ENCODE measurements at regions of chr15 and their contacts with region 1.

Region 1: GRCh38 chr15:52179278-52180195 is 11.7 kb downstream of the GNB5 start:
- DNase-seq: peak; percentile 57
- ATAC-seq: peak; percentile 85
- H3K4me3 ChIP-seq: peak overlapping the region; percentile 66 to 80 (median 76)
- H3K27ac ChIP-seq: no peak overlapping the region
- H3K4me1 ChIP-seq: peaks cover 54% of the 10 kb centered on the region
- H3K27me3 ChIP-seq: 0 out of 5 replicates have a peak, but pooled peaks cover 0 to 4% of the 10 kb centered on the region in 2 experiments
- CTCF ChIP-seq: no peak
- EP300 ChIP-seq: no peak
- POLR2A ChIP-seq: peak; percentile 38 to 65; a peak in 3 of 4 replicates
- RAD21 ChIP-seq: no peak

Region 2: DNA sequence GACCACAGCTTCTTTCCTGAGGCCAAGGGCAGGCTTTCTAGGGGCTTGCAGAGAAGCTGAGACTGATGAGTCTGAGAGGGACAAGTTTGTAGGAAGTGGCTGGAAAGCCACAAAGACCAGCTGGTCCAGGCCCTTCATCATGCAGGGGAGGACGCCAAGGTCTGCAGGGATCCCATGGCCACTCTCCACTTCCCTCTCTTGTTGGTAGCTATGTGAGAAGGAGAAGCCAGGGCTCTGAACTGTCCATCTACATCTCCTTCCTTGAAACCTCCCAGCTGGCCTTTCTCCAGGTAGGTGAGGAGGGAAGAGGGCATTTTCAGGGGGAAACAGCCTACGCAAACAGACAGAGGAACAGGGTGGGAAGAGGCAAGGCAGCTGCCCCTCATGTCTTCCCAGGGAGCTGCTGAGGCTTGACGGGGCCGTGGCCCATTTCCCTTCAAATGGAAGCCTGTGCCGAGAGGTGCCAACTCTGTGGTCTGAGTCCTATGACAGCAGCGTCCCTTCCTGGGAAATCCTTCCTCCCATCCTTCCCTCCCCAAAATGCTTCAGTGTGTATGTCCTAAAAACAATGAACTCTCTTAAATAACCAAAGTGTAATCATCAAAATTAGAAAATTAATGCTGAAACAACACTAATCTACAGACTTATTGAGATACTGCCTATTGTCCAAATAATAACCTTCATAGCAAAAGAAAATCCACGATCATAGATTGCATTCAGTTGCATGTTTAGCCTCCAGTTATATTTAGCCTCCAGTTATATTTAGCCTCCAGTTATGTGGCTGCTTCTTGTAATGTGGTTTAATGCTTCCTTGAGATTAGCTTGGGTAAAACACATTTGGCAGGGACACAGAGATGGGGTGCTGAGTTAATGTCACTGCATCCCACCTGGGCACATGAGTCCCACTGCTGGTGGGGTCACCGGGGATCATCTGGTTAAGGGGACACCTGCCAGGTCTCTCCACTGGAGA is 24.4 kb before region 1 on chr15:
- CTCF ChIA-PET with region 1: no interaction called
- POLR2A ChIA-PET with region 1: interaction called, 10 read pairs
- in situ Hi-C with region 1: no loop called
- intact Hi-C with region 1: no loop called
- DNase-seq: no peak
- ATAC-seq: no peak
- H3K4me3 ChIP-seq: no peak overlapping the region
- H3K27ac ChIP-seq: no peak overlapping the region
- H3K4me1 ChIP-seq: peaks cover 21% of the 10 kb centered on the region
- H3K27me3 ChIP-seq: no peaks in the 10 kb centered on the region
- CTCF ChIP-seq: no peak
- EP300 ChIP-seq: no peak
- POLR2A ChIP-seq: no peak
- RAD21 ChIP-seq: no peak

Region 3: DNA sequence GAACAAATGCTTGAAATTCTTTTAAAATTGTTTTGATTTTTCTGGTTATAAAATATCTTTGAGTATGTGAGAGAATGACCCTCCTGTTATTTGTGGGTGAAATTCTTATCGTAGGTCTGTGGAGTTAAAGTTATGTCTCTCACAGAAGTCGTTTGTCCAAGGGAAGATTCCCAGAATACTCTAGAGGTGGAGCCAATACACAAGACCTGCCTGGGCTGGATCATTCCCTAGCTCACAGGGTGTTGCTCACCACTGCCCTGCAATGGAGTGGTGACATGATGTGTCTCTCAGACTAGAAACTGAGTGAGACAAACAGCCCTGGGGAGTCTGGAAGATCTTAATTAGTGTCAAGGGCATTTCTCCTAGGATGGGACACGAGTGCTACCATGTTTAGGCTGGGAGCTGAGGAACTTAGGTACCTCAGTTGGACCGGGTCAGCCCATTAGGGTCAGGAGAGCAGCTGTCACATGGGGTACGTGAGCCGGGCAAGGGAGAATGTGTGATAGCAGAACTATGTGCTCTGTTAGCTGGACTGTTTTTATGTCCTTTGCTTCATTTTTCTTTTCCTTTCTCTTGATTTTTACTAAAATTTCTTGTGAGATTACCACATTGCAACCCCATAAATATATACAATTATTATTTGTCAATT is 169.6 kb after region 1 on chr15:
- CTCF ChIA-PET with region 1: no interaction called
- POLR2A ChIA-PET with region 1: no interaction called
- in situ Hi-C with region 1: no loop called
- intact Hi-C with region 1: no loop called
- DNase-seq: no peak
- ATAC-seq: no peak
- H3K4me3 ChIP-seq: no peak overlapping the region
- H3K27ac ChIP-seq: no peak overlapping the region
- H3K4me1 ChIP-seq: no peaks in the 10 kb centered on the region
- H3K27me3 ChIP-seq: no peaks in the 10 kb centered on the region
- CTCF ChIP-seq: no peak
- EP300 ChIP-seq: no peak
- POLR2A ChIP-seq: no peak
- RAD21 ChIP-seq: no peak

Region 4: DNA sequence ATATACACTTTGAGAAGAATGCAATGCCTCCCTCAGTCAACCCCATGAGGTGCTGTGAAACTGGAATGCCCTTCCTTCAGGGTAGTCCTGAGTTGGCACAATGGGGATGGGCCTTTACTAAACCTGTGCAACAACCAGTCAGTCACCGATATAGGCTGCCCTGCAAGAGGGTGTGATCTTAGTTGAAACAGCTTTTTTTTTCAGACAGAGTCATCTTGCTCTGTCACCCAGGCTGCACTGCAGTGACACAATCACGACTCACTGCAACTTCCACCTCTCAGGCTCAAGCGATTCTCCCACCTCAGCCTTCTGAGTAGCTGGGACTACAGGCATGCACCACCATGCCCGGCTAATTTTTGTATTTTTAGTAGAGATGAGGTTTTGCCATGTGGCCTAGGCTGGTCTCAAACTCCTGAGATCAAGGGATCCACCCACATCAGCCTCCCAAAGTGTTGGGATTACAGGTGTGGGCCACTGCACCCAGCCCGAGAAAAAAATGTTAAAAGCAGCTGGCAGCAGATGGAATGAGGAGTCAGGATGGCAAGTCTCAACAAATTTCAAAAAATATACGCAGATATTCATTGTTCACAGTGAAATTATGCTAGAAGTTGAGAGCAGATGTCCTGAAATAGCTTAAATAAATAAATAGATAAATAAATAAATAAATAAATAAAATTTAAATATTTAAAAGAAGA is 317.4 kb after region 1 on chr15:
- CTCF ChIA-PET with region 1: no interaction called
- POLR2A ChIA-PET with region 1: no interaction called
- in situ Hi-C with region 1: no loop called
- intact Hi-C with region 1: no loop called
- DNase-seq: no peak
- ATAC-seq: no peak; the same call in 2 of the 3 replicates
- H3K4me3 ChIP-seq: no peak overlapping the region
- H3K27ac ChIP-seq: no peak overlapping the region
- H3K4me1 ChIP-seq: no peaks in the 10 kb centered on the region
- H3K27me3 ChIP-seq: no peaks in the 10 kb centered on the region
- CTCF ChIP-seq: no peak
- EP300 ChIP-seq: no peak
- POLR2A ChIP-seq: no peak
- RAD21 ChIP-seq: no peak